ENCODE measurements at regions of chr17 and their contacts with region 1.

Region 1: GRCh38 chr17:10013365-10014221 is 108.5 kb upstream of the RCVRN start:
- DNase-seq: no peak
- ATAC-seq: peak; percentile 50

Region 2: GRCh38 chr17:10059369-10060211 is 46.0 kb after region 1 on chr17:
- intact Hi-C with region 1: loop called (anchors 10 kb)
- DNase-seq: peak; percentile 70
- ATAC-seq: peak; percentile 62